ENCODE measurements at regions of chrX and their contacts with region 1.

Region 1: DNA sequence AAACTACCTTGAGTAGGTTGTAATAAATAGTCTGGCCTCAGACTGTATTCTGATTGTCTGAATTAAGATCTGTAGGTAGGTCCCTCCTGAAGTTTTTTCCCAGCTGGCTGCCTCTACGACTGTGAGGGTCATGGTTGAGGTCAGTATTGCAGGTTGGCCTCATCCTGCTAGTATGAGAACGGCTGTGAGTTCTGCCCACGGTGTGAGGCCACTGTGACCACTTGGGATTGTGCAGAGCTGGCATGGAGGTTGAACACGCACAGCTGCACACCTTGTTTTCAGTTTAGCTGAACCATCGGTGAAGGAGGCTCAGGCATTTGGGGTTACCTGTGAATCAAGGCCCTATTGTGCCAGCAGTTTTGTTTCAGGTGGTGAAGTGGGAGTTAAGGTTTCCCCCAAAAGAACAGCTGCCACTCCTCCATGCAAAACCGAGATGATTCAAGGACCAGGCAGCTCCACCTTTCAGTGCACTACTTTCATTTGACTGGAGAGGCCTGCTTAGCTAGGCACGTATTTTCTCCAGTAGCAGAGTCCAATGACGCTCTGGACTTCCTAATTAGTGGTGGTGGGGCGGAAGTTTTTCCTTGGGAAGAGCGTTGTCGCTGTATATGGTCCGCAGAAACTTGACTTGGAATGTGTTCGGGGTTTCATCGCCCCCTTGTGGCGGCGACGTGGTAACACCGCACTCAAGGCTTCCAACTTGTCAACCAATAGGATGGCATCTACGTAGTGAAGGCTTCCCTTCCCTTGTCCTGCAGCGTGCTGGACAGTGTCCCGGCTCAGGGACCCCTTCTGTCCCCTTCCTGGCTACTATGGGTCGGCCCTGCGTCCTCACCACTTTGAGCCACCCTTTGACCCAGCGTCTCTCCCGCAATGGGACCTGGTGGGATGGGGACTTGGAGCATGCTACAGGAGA is 13.8 kb downstream of the CMC4 start:
- DNase-seq: peak; percentile 44 to 82 (median 68)
- ATAC-seq: peak; percentile 98
- H3K4me3 ChIP-seq: no peak overlapping the region
- H3K27ac ChIP-seq: no peak overlapping the region
- H3K4me1 ChIP-seq: peaks cover 0 to 9% of the 10 kb centered on the region in 2 donors
- H3K27me3 ChIP-seq: no peaks in the 10 kb centered on the region
- CTCF ChIP-seq: peak; percentile 52 to 76

Region 2: DNA sequence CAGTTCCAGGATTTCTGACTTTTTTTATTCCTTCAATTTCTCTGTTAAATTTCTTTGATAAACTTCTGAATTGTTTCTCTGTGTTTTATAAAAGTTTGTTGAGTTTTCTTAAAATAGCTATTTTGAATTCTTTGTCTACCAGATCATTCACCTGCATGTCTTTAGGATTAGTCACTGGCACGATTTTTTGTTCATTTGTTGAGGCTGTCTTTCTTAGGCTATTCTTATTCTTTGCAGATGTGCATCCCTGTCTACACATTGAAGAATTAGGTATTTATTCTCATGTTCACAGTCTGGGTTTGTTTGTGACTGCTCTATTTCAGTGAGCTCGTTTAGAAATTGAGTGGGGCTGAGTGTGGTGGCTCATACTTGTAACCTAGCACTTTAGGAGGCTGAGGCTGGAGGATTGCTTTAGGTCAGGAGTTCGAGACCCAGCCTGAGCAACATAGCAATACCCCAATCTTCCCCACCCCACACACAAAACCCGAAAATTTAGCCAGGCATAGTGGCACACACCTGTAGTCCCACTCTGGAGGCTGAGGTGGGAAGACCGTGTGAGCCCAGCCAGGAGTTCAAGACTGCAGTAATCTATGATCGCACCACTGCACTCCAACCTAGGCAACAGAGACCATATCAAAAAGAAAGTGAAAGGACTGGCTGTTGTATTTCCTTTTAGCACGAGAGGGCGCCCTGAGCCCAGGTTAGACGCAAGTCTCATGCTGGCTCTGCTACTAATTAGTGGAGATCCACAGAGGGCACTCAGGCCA is 76.6 kb before region 1 on chrX:
- intact Hi-C with region 1: loop called in 1 of 2 experiments (anchors 5 kb)
- DNase-seq: peak; percentile 52 to 71 (median 60)
- ATAC-seq: peak; percentile 100
- H3K4me3 ChIP-seq: peak overlapping the region; percentile 12 to 20
- H3K27ac ChIP-seq: peak overlapping the region in 1 of 2 donors; percentile 37
- H3K4me1 ChIP-seq: peaks cover 0 to 5% of the 10 kb centered on the region in 2 donors
- H3K27me3 ChIP-seq: no peaks in the 10 kb centered on the region
- CTCF ChIP-seq: peak; percentile 54